GM10248 (cell line): ENCODE measurements at regions of chr9 and their contacts with region 1.

Region 1: GRCh38 chr9:130997925-130998596 is 10.9 kb upstream of the LAMC3 start:
- DNase-seq: peak; percentile 81
- CTCF ChIP-seq: peak; percentile 45

Region 2: GRCh38 chr9:130672466-130672865 is 325.6 kb before region 1 on chr9:
- CTCF ChIA-PET with region 1: no interaction called
- POLR2A ChIA-PET with region 1: no interaction called
- DNase-seq: no peak
- CTCF ChIP-seq: no peak

Region 3: DNA sequence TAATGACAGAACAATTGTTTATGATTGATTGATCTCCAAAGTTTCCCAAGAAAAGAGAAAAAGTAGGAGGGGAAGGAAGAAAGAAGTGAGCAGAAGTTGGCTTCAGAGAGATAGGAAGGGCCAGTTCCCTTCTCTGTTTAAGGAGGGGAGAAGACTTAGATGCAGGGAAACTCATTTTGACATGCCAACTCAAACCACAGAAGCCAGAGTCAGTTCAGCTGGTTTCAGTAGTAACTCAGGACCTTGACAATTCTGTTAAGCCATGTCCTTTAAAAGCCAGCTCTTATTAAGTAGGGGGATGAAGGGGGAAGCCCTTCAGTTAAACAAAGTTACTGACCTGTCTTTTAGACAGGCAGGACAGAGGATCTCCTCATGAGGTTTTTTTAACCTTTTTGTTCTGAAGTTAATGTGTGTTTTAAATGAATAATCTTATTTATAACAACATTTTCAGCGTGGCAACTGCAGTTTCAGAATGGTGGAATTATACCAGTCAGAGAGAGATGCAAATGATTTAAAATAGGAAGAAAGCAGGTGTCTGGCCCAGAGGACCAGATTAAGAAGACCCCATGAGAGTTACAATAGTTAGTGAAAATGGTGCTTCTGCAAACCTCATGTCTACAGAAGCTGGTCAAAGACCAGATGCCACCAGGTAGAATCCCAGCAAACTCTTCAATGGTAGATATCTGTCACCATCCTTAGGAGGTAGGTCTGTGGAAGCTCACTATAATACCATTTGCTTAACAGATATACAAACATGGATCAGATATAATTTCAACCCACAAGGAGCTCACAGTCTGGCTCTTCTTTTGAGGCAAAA is 192.3 kb before region 1 on chr9:
- CTCF ChIA-PET with region 1: no interaction called
- POLR2A ChIA-PET with region 1: no interaction called
- DNase-seq: no peak
- CTCF ChIP-seq: no peak

Region 4: DNA sequence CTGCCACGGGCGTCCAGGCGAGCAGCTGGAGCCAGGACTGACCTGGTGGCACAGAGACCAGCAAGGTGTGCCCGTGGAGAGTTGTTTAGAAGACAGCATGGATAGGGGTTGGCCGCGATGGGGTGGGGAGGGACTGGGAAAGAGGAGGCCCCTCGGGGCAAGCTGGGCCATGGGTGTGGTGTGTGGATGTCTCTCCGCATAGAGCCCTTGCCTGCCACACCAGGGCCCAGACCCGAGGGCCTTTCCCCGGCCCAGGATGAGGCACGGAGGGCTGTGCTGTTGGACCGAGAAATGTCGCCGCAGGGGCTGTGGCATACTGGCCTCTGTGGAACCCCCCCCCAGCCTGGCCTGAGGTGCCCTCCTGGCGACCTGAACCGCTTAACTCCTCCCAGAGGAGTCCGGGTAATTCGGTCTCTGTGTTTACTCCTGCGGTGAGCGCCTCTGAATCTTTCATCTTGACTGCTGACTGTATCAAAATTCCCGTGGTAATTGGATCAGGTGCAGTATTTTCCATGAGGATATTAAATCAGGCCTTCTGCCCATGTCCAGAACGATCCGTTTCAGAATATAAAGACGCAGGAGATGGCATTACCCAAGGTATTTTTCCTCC is 11.6 kb before region 1 on chr9:
- CTCF ChIA-PET with region 1: interaction called, 12 read pairs
- POLR2A ChIA-PET with region 1: no interaction called
- DNase-seq: no peak
- CTCF ChIP-seq: no peak